AG04449 (cell line): ENCODE measurements at regions of chr2 and their contacts with region 1.

Region 1: DNA sequence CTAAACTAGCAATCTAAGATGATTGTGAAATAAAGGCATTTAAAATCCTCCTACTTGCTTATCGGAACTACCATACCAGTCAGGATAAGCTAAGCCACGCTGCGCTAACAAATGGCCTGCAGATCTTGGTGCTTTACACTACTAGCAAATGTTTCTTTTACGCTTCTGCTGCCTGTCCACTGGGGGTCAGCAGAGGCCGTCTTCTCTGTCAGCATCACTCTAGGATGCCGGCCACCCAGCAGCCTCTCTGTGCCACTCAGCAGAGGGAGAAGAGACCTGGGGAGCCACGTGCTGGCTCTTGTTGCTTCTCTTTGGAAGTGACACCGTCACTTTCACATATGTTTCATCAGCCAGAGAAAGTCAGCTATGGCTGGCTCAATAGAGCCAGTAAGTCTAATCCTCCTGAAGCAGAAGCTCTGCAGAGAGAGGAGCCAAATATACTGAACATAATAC is 36.6 kb downstream of the COPS8 start:
- DNase-seq: no peak
- H3K4me3 ChIP-seq: no peak overlapping the region
- CTCF ChIP-seq: peak; percentile 63

Region 2: DNA sequence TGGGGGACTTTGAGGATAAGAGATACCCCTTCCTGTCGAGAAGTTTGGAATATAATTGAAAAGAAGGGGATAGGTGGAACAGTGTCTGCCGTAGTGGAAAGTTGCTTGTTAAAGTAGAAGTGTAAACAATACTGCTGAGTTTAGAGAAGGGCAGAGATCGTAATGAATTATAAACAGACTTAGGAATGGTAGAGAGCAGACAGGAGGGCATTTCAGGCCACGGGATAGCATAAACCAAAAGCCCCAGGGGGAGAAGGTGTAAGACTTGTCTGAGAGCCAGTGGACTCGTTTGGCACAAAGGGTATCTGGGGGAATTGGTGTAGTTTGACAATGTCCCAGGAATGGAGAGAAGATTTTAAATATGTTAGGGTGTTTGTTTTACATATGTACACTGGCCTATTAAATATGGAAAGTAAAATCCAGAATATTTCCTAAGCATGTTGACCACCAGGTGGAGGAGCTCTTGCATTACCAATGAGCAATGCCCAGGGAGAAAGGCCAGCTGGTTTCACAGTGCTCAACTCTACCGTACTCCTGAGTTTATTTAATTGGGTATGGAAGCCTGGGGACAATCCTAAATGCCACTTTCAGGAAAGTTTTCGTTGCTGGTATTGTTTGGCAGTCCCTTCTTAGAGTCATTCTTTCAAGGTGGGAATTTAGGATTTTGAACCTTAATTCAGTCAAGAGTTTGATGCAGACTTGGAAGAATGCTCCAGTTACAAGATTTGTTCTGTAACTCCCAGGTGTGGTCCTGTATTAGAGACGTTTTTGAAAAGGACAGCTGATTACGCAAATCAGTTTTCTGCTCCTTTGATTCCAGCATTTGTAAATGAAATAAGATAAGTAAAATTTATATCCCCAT is 29.1 kb before region 1 on chr2:
- CTCF ChIA-PET with region 1: interaction called, 13 read pairs
- POLR2A ChIA-PET with region 1: no interaction called
- DNase-seq: no peak
- H3K4me3 ChIP-seq: no peak overlapping the region
- CTCF ChIP-seq: peak; percentile 60

Region 3: GRCh38 chr2:237132799-237133198 is 10.6 kb after region 1 on chr2:
- CTCF ChIA-PET with region 1: interaction called, 22 read pairs
- POLR2A ChIA-PET with region 1: no interaction called
- DNase-seq: no peak
- H3K4me3 ChIP-seq: no peak overlapping the region
- CTCF ChIP-seq: no peak

Region 4: GRCh38 chr2:237213315-237214022 is 91.2 kb after region 1 on chr2:
- CTCF ChIA-PET with region 1: no interaction called
- POLR2A ChIA-PET with region 1: no interaction called
- DNase-seq: no peak
- H3K4me3 ChIP-seq: no peak overlapping the region
- CTCF ChIP-seq: no peak

Region 5: DNA sequence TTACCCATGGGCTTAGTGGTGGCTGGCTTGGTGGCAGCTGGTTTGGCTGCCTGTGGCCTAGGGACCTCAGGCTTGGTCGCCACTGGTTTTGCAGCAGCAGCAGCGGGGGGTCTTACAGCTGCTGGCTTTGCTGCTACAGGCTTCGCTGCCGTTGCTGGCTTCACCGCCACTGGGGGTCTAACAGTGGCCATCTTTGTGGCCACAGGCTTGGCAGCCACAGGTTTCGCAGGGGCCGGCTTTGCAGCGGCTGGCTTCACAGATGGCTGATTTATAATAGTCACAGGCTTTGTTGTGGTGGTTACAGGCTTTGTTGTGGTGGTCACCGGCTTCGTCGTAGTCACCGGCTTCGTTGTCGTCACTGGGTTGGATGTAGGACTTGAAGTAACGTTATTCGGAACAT is 213.9 kb after region 1 on chr2:
- CTCF ChIA-PET with region 1: no interaction called
- POLR2A ChIA-PET with region 1: no interaction called
- DNase-seq: no peak
- H3K4me3 ChIP-seq: no peak overlapping the region
- CTCF ChIP-seq: no peak

Region 6: DNA sequence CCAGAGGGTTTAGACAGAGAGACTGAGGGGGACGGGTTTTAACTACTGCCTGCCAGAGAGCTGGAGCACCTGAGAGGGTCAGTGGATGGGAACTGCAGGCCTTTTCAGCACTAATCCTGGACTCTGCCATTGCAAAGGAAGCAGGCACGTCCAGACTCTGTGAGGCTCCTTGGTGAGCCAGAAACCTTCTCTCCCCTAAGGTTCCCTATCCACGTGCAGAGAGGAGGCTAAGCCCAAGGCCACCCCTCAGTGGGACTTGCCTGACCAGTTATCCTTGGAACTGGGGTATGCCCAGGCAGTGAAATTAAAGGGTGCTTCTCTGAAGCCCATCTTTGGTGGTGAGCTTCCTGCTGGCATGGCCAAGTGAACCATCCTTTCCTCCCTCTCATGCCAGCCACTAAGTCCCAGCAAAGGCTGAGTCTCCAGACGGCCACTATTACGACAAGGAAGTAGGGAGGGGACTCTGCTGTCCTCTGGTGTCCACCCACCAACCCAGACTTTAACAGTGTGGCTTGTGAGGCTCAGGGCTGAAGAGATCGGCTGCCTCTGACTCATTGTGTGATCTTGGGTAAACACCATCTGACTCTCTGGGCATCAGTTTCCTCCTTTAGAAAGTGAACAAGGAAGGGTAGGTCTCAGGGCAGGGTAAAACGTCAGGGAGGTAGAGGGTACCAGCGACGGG is 360.9 kb after region 1 on chr2:
- CTCF ChIA-PET with region 1: interaction called, 17 read pairs
- POLR2A ChIA-PET with region 1: no interaction called
- DNase-seq: peak; percentile 57
- H3K4me3 ChIP-seq: no peak overlapping the region
- CTCF ChIP-seq: peak; percentile 59

Region 7: DNA sequence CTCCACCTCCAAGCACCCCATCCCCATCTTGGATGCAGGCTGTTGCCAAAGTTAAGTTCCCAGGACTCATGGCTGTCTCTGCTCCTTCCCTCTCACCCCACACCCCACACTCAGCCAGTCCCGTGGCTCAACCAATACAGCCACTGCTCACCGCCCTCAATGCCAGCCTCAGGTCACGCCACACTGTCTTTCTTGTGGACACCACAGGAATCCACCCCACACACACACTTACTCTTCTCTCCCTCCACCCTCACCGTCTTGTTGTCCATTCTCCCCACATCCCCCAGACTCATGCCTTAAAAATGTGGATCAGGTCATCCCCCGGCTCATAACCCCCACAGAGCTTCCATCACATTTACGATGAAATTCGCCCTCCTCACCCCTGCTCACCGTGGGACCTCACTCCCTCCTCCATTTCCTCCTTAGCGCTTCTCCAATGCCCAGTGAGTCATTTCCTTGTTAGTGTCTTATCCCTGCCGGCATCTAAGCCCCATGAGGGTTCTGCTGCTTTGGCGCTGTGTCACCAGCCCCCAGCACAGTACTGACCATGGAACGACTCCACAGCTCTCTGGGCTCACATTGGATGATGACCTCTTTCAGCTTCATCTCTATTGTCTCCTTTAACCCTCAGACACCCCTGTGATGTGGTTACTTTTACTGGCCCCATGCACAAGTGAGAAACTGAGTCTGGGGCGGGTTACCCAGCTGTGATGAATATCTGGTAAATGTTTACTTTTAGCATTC is 378.6 kb after region 1 on chr2:
- CTCF ChIA-PET with region 1: interaction called, 11 read pairs
- POLR2A ChIA-PET with region 1: no interaction called
- DNase-seq: peak; percentile 100
- H3K4me3 ChIP-seq: no peak overlapping the region; the same call in 1 of the 2 replicates
- CTCF ChIP-seq: no peak